CD8-positive, alpha-beta T cell (primary cell): ENCODE measurements at regions of chr2 and their contacts with region 1.

Region 1: DNA sequence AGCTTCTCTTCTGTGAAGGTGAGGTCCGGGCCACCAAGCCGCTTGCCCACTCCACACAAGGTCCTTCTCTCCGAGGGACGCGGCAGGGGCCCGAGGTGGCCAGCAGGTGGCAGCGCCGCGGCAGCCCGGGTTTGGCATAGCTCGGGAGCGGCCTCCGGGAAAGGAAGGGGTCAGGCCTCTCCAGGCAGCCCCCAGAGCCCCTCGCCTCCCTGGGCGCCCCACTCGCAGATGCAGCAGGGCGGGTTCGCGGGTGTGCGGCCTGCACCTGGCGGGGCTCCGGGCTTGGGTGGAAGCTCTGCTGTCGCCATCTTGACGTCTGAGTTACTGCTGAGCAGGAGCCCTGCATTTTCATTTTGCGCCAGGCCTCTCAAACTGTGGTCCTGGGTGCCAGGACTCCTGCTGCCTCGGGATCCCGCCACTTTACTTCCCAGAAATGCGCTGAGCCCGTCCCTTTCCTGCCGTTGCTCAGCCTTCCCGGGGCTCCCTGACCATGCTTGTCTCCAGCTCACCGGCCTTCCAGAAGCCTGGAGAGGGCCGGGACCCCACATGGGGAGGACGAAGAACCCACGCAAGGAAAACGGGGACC is 18.6 kb upstream of the NCL start:
- DNase-seq: peak; percentile 47 to 86 (median 73)
- ATAC-seq: peak; percentile 82
- H3K4me3 ChIP-seq: peak overlapping the region; percentile 71 to 73
- H3K4me3 Mint-ChIP-seq: peak overlapping the region; percentile 76
- H3K27ac ChIP-seq: peak overlapping the region; percentile 77 to 89
- H3K27ac Mint-ChIP-seq: peak overlapping the region; percentile 91
- H3K4me1 ChIP-seq: peaks cover 4% of the 10 kb centered on the region
- H3K4me1 Mint-ChIP-seq: peaks cover 14% of the 10 kb centered on the region
- H3K27me3 ChIP-seq: no peaks in the 10 kb centered on the region
- H3K27me3 Mint-ChIP-seq: no peaks in the 10 kb centered on the region
- CTCF ChIP-seq: peak; percentile 75

Region 2: DNA sequence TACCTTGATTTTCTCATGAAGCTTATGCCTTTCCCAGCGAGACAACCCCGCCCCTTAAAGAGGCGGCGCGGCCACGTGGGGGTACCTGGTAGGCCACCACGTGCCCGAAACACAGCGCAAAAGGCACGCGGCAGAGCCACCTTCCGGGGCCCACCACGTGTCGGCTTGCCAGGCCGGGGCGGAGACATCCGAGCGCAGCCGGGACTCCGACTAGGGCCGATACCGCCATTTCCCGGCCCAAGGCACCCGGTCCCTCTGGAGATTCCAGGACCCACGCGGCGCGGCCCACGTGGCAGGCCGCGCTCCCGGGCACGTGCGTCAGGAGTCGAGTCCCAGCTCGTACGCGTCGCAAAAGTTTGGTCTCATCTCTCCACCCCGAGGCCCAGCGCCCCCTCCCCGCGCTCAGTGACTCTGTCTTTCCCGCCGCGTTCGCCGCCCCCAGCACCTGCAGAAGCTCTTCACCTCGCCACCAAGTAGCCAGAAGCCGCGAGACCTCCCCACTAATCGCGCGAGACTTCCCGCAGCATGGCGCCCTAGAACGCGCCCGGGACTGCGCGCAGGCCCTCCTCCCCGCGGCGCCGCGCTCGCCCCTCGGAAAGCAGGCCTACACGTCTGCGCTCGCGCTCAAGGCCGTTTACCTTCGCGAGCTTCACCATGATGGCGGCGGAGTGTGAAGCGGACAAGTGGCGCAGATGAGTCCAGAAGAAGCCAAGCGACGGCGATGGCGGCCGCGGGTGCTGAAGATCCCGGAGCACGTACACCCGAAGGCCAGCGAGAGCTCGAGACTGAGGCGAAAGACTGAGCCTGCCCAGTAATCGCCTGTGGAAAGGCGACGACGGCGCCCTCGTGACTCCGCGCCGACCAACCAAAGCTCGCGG is 19.0 kb before region 1 on chr2 and contains the start of gene NCL:
- CTCF ChIA-PET with region 1: interaction called, 31 read pairs
- POLR2A ChIA-PET with region 1: interaction called, 60 read pairs
- intact Hi-C with region 1: loop called (anchors 1 kb)
- DNase-seq: peak; percentile 71 to 94 (median 82)
- ATAC-seq: peak; percentile 62
- H3K4me3 ChIP-seq: peak within 1 kb of the TSS; percentile 97
- H3K4me3 Mint-ChIP-seq: peak within 1 kb of the TSS; percentile 96
- H3K27ac ChIP-seq: peak within 1 kb of the TSS; percentile 97 to 98
- H3K27ac Mint-ChIP-seq: peak within 1 kb of the TSS; percentile 100
- H3K4me1 ChIP-seq: peaks cover 36% of the 10 kb centered on the region
- H3K4me1 Mint-ChIP-seq: peaks cover 52% of the 10 kb centered on the region
- H3K27me3 ChIP-seq: no peaks in the 10 kb centered on the region
- H3K27me3 Mint-ChIP-seq: no peaks in the 10 kb centered on the region
- CTCF ChIP-seq: no peak
- total RNA-seq, gene NCL: 390 to 394 TPM

Region 3: GRCh38 chr2:231503766-231504165 is 20.9 kb after region 1 on chr2:
- CTCF ChIA-PET with region 1: interaction called, 11 read pairs
- POLR2A ChIA-PET with region 1: interaction called, 3 read pairs
- intact Hi-C with region 1: no loop called
- DNase-seq: no peak
- ATAC-seq: no peak
- H3K4me3 ChIP-seq: no peak overlapping the region
- H3K4me3 Mint-ChIP-seq: no peak overlapping the region
- H3K27ac ChIP-seq: no peak overlapping the region
- H3K27ac Mint-ChIP-seq: no peak overlapping the region
- H3K4me1 ChIP-seq: no peaks in the 10 kb centered on the region
- H3K4me1 Mint-ChIP-seq: no peaks in the 10 kb centered on the region
- H3K27me3 ChIP-seq: no peaks in the 10 kb centered on the region
- H3K27me3 Mint-ChIP-seq: no peaks in the 10 kb centered on the region
- CTCF ChIP-seq: no peak

Region 4: GRCh38 chr2:231861532-231861931 is 378.6 kb after region 1 on chr2:
- CTCF ChIA-PET with region 1: no interaction called
- POLR2A ChIA-PET with region 1: no interaction called
- intact Hi-C with region 1: no loop called
- DNase-seq: no peak
- ATAC-seq: no peak
- H3K4me3 ChIP-seq: no peak overlapping the region
- H3K4me3 Mint-ChIP-seq: no peak overlapping the region
- H3K27ac ChIP-seq: no peak overlapping the region
- H3K27ac Mint-ChIP-seq: no peak overlapping the region
- H3K4me1 ChIP-seq: no peaks in the 10 kb centered on the region
- H3K4me1 Mint-ChIP-seq: no peaks in the 10 kb centered on the region
- H3K27me3 ChIP-seq: peaks cover 0 to 3% of the 10 kb centered on the region in 2 experiments
- H3K27me3 Mint-ChIP-seq: peaks cover 10% of the 10 kb centered on the region
- CTCF ChIP-seq: no peak